Common myeloid progenitor, CD34-positive (primary cell): ENCODE measurements at regions of chr1 and their contacts with region 1.

Region 1: DNA sequence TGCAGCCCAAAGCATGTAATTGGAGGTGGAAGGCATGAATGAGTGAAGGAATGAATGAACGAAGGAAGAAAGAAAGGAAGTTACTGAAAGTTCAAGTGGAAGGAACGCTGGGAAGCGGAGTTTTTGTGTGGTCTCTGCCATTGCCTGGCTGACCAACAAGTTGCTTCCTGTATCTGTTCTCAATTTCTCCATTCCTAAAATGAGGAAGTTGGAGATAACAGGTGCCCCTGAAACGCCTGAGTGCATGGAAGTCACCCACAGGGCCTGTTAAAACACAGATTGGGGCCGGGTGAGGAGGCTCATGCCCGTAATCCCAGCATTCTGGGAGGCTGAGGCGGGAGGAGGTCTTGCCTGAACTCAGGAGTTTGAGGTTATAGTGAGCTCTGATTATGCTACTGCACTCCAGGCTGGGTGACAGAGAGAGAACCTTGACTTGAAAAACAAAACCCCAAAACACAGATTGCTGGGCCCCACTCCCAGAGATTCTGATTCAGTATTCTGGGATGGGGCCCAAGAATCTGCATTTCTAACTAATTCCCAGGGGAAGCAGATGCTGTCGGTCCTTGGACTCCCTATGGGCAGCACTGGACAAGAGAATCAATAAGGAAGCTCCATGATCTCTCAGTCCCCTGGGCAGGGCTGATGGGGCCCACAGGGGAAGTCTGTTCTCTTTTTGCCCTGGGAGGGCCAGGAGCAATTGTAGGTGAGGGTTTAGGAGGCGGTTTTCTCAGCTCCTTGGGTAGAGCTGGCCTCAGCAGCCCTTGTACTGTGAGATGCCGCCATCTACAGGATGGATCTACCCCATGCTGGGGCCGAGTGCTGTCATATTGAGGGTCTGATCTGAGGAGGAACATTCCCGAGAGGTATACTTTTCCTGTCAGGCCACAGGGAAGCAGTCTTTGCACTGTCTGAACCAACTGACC is 3.3 kb upstream of the CNR2 start:
- DNase-seq: peak; percentile 82 to 90 (median 87)
- H3K4me3 ChIP-seq: peak overlapping the region in 4 of 7 experiments; percentile 23 to 43 (median 32)
- H3K27ac ChIP-seq: no peak overlapping the region
- H3K4me1 ChIP-seq: peaks cover 21 to 87% (median 67%) of the 10 kb centered on the region in 4 experiments
- H3K27me3 ChIP-seq: no peaks in the 10 kb centered on the region

Region 2: DNA sequence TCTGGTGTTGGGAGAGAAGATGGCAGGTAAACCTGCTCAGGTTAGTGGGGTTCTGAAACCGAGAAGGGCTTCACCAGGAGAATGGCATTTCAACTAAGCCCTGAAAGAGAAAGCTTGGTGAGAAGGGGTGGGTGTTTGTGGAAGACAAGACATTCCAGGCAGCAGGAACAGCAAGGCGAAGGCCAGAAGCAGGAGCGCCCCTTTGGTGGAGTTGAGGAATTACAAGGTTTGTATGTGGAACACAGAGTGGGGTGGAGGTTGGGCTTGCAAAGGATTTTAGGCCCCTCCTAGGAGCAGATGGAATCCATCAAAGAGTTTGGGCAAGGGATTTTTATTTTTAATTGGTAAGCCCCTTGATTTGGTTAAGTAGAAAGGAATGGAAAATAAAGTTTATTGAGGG is 198.0 kb before region 1 on chr1:
- CTCF ChIA-PET with region 1: no interaction called
- POLR2A ChIA-PET with region 1: no interaction called
- DNase-seq: no peak
- H3K4me3 ChIP-seq: no peak overlapping the region
- H3K27ac ChIP-seq: no peak overlapping the region
- H3K4me1 ChIP-seq: no peaks in the 10 kb centered on the region
- H3K27me3 ChIP-seq: no peaks in the 10 kb centered on the region

Region 3: GRCh38 chr1:23772049-23772853 is 144.2 kb before region 1 on chr1:
- CTCF ChIA-PET with region 1: interaction called, 24 read pairs
- POLR2A ChIA-PET with region 1: no interaction called
- DNase-seq: peak; percentile 76 to 87 (median 81)
- H3K4me3 ChIP-seq: no peak overlapping the region
- H3K27ac ChIP-seq: peak overlapping the region in 1 of 2 experiments; percentile 29
- H3K4me1 ChIP-seq: peaks cover 3 to 11% (median 8%) of the 10 kb centered on the region in 4 experiments
- H3K27me3 ChIP-seq: no peaks in the 10 kb centered on the region

Region 4: DNA sequence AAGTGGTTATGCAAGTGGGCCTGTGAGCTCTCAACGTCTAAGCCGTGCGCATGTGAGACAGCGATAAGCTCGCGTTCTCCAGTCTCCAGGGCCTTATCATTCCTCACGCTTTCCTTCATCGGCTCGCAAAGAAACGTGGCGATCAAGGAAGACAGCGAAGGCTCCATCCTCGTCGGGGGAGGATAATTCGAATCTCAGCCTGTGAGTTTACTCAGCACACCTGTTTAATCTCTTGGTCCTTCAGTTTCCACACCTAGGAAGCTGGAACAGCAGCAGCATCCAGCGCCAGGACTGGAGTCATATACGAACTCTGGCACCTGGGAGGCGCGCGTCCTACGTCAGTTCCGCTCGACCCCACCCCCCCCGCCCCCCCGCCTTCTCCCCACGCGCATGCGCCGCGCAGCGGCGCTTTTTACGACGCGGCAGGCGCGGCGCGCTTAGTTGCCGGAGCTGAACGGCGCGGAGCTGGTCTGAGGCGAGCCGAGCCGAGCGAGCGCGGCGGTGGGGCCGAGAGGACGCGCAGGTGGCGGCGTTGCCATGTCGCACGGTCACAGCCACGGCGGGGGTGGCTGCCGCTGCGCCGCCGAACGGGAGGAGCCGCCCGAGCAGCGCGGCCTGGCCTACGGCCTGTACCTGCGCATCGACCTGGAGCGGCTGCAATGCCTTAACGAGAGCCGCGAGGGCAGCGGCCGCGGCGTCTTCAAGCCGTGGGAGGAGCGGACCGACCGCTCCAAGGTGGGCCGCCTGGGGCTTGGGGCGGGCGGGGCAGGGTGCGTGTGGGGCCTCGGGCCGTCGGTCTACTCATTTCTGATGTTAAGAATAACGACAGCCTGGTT is 138.3 kb before region 1 on chr1 and contains the start of gene PITHD1:
- CTCF ChIA-PET with region 1: interaction called, 11 read pairs
- POLR2A ChIA-PET with region 1: interaction called, 3 read pairs
- DNase-seq: peak; percentile 90 to 94 (median 91)
- H3K4me3 ChIP-seq: peak within 1 kb of the TSS; percentile 81 to 95 (median 90)
- H3K27ac ChIP-seq: peak within 1 kb of the TSS; percentile 89 to 95
- H3K4me1 ChIP-seq: peaks cover 10 to 31% (median 19%) of the 10 kb centered on the region in 4 experiments
- H3K27me3 ChIP-seq: no peaks in the 10 kb centered on the region

Region 5: DNA sequence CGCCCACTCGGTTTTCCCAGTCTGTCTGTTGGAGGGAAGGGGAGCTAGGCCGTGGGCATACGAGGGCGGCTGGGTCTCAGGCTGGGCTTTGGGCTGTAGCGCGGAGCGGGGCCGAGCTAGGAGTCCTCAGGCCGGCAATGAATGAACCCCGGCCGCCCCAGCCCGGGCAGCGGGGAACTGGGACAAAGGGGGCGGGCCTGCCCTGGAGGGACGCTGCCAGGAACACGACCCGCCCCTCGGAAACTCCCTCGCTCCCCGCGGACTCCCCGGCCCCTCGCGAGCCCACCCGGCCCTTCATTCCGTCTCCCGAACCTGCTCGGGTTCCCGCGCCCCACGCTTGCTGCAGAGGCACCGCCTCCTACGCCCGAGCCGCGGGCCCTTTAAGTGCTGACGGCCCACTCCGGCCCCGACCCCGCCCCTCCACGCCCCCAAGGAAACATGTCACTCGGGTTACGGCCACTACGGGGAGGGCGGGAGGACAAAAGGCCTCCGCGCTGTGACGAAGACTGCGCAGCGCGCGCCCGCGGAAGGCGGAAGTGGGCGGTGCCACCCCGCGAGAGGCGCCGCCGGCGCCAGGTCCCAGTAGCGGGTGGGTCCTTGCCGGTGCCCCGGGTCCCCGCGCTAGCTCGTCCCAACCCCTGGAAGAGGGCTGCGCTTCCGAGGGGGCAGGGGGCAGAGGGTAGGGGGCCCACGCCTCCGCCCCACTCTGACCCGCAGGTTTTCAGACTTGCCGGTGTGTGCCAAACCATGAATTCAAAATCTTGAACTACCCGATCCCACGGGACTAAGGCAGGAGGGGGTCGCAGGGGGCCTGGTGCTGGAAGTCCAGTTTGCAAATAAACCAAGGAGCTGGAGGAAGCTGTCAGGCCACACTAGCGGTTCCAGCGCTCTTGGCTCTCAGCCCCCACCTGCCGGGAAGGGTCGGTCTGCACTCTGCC is 115.8 kb before region 1 on chr1 and contains the start of gene GALE:
- CTCF ChIA-PET with region 1: interaction called, 108 read pairs
- POLR2A ChIA-PET with region 1: no interaction called
- DNase-seq: peak; percentile 95 to 97 (median 97)
- H3K4me3 ChIP-seq: peak within 1 kb of the TSS; percentile 57 to 89 (median 81)
- H3K27ac ChIP-seq: peak within 1 kb of the TSS; percentile 64 to 86
- H3K4me1 ChIP-seq: peaks cover 0 to 26% (median 21%) of the 10 kb centered on the region in 4 experiments
- H3K27me3 ChIP-seq: no peaks in the 10 kb centered on the region

Region 6: DNA sequence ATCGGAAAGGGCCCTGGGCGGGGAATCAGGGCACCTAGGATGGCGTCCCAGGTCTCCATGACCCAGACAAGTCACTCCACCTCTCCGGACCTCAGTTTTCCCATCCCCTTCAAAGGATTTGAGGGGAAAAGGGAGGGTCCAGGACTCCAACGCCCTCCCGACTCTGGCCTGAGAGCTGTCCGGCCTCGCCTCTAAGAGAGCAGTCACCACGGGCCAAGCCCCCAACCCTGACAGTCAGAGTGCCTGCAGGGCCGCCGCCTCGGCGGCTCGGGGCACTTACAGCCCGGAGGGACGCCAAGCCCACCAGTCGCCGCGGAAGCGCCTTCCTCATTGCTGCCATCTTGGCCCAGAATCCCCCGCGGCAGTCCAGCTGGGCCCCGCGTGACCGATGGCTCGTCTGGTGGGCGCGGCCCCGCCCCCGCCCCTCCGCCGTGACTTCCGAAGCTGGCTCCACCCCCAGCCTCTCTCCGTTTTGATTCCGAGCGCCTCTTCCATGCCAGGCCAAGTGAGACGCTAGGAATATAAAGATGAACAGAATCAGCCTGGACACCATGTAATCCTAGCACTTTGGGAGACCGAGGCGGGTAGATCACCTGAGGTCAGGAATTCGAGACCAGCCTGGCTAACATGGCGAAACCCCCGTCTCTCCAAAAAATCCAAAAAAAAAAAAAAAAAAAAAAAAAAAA is 91.3 kb before region 1 on chr1 and contains the start of gene HMGCL:
- CTCF ChIA-PET with region 1: interaction called, 12 read pairs
- POLR2A ChIA-PET with region 1: no interaction called
- DNase-seq: peak; percentile 91 to 95 (median 94)
- H3K4me3 ChIP-seq: peak within 1 kb of the TSS; percentile 57 to 99 (median 97)
- H3K27ac ChIP-seq: peak within 1 kb of the TSS; percentile 88 to 97
- H3K4me1 ChIP-seq: peaks cover 4 to 18% (median 15%) of the 10 kb centered on the region in 4 experiments
- H3K27me3 ChIP-seq: no peaks in the 10 kb centered on the region

Region 7: GRCh38 chr1:23897083-23897482 is 19.4 kb before region 1 on chr1:
- CTCF ChIA-PET with region 1: interaction called, 13 read pairs
- POLR2A ChIA-PET with region 1: no interaction called
- DNase-seq: peak in 2 of 3 donors; percentile 74 to 81
- H3K4me3 ChIP-seq: no peak overlapping the region
- H3K27ac ChIP-seq: no peak overlapping the region
- H3K4me1 ChIP-seq: peaks cover 9 to 49% (median 31%) of the 10 kb centered on the region in 4 experiments
- H3K27me3 ChIP-seq: peaks cover 0 to 12% (median 0%) of the 10 kb centered on the region in 5 experiments